ENCODE measurements at regions of chr20 and their contacts with region 1.

Region 1: GRCh38 chr20:29443819-29444218 is 1813.6 kb upstream of the DEFB115 start:
- DNase-seq: no peak
- H3K4me3 ChIP-seq: no peak overlapping the region
- H3K27ac ChIP-seq: no peak overlapping the region
- H3K4me1 ChIP-seq: no peaks in the 10 kb centered on the region
- H3K27me3 ChIP-seq: peaks cover 25% of the 10 kb centered on the region
- CTCF ChIP-seq: no peak

Region 2: GRCh38 chr20:29410805-29411457 is 32.9 kb before region 1 on chr20:
- CTCF ChIA-PET with region 1: no interaction called
- POLR2A ChIA-PET with region 1: no interaction called
- intact Hi-C with region 1: no loop called
- DNase-seq: no peak
- H3K4me3 ChIP-seq: no peak overlapping the region
- H3K27ac ChIP-seq: no peak overlapping the region
- H3K4me1 ChIP-seq: no peaks in the 10 kb centered on the region
- H3K27me3 ChIP-seq: peaks cover 14% of the 10 kb centered on the region; the same call in 1 of the 2 replicates
- CTCF ChIP-seq: no peak

Region 3: DNA sequence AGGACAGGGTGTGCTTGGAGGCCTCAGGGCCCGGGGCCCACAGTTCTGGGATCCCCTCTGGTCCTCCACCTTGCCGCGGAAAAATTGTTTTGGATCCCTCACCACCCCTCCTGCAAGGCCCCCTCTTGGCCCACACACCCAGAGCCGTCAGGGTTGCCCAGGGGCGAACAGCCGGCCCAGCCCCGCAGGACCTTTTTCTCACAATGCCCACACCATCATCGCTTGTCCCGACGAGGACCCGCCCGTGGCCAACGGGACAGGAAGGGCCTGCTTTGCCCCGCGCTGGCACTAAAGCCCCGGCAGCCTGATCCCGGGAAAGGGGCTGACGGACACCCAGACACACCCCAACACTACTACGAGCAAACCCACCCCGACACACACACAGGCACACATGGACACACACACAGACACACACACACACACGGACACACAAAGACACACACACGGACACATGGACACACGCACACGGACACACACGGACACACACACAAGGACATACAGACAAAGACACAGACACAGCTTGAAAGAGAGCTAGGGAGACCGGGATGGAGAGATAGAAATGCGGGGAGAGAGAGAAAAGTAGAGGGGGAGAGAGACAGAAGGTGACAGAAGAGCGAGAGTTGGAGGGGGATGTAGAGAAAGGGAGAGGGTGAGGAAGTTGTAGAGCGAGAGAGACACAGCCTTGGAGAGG is 320.1 kb after region 1 on chr20:
- CTCF ChIA-PET with region 1: no interaction called
- POLR2A ChIA-PET with region 1: no interaction called
- intact Hi-C with region 1: loop called (anchors 5 kb)
- DNase-seq: no peak
- H3K4me3 ChIP-seq: no peak overlapping the region
- H3K27ac ChIP-seq: no peak overlapping the region
- H3K4me1 ChIP-seq: no peaks in the 10 kb centered on the region
- H3K27me3 ChIP-seq: peaks cover 10% of the 10 kb centered on the region; the same call in 1 of the 2 replicates
- CTCF ChIP-seq: no peak

Region 4: DNA sequence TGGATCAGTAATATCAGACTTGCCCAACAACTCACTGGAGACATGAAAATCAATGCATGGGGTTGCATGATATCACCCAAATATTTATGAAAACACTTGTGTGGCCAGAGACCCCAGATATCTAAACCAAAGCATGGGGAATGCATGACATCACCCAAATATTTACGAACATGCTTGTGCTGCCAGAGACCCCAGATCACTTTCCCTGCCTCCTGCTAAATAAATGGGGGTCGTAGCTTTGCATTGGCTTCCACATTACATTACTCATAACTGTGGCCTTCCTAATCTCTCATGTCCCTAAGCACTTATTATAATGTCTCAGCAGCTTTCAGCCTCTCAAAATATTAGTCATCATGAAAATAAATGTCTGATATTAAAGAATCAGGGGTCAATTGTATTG is 975.6 kb after region 1 on chr20:
- CTCF ChIA-PET with region 1: no interaction called
- POLR2A ChIA-PET with region 1: no interaction called
- intact Hi-C with region 1: no loop called
- DNase-seq: no peak
- H3K4me3 ChIP-seq: no peak overlapping the region
- H3K27ac ChIP-seq: no peak overlapping the region
- H3K4me1 ChIP-seq: no peaks in the 10 kb centered on the region
- H3K27me3 ChIP-seq: peaks cover 13% of the 10 kb centered on the region
- CTCF ChIP-seq: no peak

Region 5: DNA sequence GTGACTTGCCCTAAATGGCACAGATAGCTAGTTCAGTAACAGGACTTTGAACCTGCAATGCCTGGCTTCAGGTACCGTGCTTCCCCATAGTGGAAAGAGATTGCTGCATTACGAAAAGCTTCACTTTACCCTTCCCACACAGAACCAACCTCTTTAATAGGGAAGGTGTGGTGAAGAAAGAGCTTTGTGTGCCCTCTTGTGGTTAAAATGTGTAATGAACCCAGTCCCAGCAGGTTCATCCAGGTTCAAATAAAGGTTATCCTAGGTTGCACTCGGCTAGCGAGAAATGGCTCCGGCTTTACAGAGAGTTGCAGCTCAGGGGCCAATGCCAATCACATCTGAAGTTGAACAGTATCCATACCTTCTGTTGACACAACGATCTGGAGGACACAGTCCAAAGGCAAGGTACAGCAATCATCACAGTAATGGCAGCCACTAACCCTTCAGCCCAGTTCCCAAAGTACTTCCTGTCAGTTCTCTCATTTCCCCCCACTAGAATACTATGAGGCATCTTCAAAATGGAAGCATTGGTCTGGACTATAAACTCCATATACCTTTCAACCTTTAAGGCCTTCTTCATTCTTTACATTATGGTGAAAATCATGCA is 1816.6 kb after region 1 on chr20:
- CTCF ChIA-PET with region 1: no interaction called
- POLR2A ChIA-PET with region 1: no interaction called
- intact Hi-C with region 1: loop called (anchors 5 kb)
- DNase-seq: peak in 1 of 2 experiments; percentile 9
- H3K4me3 ChIP-seq: no peak overlapping the region
- H3K27ac ChIP-seq: no peak overlapping the region
- H3K4me1 ChIP-seq: no peaks in the 10 kb centered on the region
- H3K27me3 ChIP-seq: no peaks in the 10 kb centered on the region
- CTCF ChIP-seq: peak; percentile 73